PC-3 (cell line): ENCODE measurements at regions of chr7 and their contacts with region 1.

Region 1: DNA sequence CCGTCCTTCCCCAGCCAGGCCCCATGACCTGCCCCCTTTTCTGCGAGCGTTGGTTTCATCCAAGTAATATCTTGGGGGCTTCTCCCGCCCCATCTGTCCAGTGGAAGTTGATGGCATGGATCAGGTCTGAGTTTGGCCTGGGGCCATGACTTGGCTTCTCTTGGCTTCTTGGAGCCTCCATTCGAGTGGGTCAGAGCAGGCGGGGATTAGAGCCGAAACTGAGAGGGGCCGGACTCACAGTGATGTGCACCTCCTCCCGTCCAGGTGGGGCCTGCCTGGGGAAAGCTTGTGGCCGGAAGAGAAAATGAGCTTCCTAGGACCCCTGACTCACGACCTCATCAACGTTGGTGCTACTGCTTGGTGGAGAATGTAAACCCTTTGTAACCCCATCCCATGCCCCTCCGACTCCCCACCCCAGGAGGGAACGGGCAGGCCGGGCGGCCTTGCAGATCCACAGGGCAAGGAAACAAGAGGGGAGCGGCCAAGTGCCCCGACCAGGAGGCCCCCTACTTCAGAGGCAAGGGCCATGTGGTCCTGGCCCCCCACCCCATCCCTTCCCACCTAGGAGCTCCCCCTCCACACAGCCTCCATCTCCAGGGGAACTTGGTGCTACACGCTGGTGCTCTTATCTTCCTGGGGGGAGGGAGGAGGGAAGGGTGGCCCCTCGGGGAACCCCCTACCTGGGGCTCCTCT is 15.1 kb upstream of the LIMK1 start:
- DNase-seq: no peak
- ATAC-seq: no peak
- H3K4me3 ChIP-seq: no peak overlapping the region
- H3K27ac ChIP-seq: no peak overlapping the region
- H3K4me1 ChIP-seq: no peaks in the 10 kb centered on the region
- H3K27me3 ChIP-seq: no peaks in the 10 kb centered on the region
- CTCF ChIP-seq: no peak

Region 2: DNA sequence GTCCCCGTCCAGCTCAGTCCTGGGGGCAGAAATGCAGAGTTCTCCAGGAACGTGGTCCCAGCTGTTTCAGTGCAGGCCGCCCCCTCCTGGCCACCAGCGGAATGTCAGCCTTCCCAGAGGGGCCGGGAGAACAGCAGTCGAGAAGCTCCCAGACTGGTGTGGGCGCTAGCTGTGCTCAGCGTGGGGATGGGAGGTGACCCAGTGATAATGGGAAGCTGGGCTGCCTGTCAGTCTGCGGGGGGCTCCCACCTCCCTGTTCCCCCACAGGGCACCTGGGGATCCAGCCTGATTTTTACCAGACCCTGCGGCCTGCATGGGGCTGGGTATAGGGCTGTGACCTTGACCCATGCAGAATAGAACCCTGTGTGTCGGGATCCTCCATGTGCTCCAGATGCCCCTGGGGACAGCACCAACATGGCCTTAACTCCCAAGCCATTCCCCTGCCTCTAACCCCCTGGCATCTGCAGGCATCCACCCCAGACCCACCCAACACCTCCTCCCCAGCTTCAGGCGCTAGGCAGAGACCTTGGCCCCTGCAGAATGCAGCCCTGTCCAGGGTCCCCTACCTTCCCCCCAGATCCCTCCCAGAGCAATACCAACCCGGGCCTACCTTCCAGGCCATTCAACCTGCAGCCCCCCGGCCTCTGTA is 41.5 kb before region 1 on chr7:
- CTCF ChIA-PET with region 1: no interaction called
- POLR2A ChIA-PET with region 1: no interaction called
- intact Hi-C with region 1: no loop called
- DNase-seq: peak; percentile 63
- ATAC-seq: peak; percentile 68
- H3K4me3 ChIP-seq: no peak overlapping the region
- H3K27ac ChIP-seq: no peak overlapping the region
- H3K4me1 ChIP-seq: peaks cover 12% of the 10 kb centered on the region
- H3K27me3 ChIP-seq: peaks cover 18% of the 10 kb centered on the region
- CTCF ChIP-seq: peak; percentile 92

Region 3: DNA sequence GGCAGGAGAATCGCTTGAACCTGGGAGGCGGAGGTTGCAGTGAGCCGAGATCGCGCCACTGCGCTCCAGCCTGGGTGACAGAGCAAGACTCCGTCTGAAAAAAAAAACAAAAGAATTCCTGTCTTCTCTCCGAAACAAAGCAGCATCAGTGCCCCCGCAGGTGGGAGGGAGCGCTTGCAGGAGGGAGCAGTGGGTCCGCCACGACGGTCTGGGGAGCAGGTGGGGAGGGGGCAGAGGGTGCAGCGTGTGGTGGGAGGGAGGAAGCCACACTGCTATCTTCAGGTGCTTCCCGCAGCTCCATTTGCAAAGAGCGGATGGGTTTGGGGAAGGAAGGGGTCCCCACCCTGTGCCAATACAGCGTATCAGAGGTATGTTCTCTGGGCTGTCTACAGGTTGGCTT is 46.8 kb after region 1 on chr7:
- CTCF ChIA-PET with region 1: no interaction called
- POLR2A ChIA-PET with region 1: no interaction called
- intact Hi-C with region 1: no loop called
- DNase-seq: no peak
- ATAC-seq: no peak
- H3K4me3 ChIP-seq: no peak overlapping the region
- H3K27ac ChIP-seq: no peak overlapping the region
- H3K4me1 ChIP-seq: no peaks in the 10 kb centered on the region
- H3K27me3 ChIP-seq: no peaks in the 10 kb centered on the region
- CTCF ChIP-seq: peak; percentile 35; the same call in 1 of the 2 replicates

Region 4: DNA sequence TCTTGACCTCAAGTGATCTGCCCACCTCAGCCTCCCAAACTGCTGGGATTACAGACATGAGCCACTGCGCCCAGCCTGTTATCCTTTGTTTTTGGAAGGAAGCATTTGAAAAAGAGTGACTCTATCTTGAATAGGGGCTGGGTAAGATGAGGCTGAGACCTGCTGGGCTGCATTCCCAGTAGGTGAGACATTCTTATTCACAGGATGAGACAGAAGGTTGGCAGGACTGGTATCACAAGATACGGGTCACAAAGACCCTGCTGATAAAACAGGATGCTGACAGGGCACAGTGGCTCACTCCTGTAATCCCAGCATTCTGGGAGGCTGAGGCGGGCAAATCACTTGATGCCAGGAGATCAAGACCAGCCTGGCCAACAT is 65.1 kb after region 1 on chr7:
- CTCF ChIA-PET with region 1: interaction called, 14 read pairs
- POLR2A ChIA-PET with region 1: no interaction called
- intact Hi-C with region 1: no loop called
- DNase-seq: peak; percentile 96
- ATAC-seq: peak; percentile 85
- H3K4me3 ChIP-seq: no peak overlapping the region
- H3K27ac ChIP-seq: peak overlapping the region; percentile 57
- H3K4me1 ChIP-seq: peaks cover 6% of the 10 kb centered on the region; the same call in 1 of the 2 replicates
- H3K27me3 ChIP-seq: no peaks in the 10 kb centered on the region
- CTCF ChIP-seq: no peak

Region 5: DNA sequence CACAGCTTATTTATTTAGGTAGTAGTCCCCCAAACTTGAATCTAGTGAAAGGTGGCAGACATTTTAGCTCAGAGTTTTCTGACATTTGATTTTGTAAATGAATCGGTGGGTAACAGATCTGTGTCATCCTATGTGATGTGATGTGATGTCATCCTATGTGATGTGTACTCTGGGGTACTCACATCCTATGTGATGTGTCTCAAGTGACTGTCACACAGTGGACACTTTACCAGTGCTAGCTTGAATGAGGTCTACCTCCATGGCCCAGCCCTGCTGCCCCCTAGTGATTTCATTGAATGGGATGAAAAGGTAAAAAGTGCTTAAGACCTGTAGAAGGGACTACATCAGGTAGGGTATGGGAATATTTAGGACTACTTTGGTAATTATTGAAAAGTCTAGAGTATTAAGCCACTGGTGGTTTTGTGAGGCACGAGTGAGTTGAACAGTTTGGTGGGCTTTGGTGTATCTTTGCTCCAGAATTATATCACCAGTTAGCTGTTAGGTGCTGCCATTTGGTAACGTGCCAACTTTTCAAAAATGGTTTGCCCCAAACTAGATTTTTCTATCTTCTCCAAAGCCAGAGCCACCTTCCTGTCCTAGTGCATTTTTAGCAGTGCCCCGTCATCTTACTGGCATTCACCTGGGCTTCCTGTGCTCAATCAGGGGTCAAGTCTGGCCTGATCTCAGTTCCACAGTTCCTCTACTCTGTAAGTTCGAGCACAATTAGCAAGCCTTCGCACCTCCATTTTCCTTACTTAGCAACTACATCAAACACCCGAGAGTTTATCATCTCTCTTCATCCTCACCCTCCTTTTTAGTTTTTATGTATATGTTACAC is 115.3 kb after region 1 on chr7:
- CTCF ChIA-PET with region 1: no interaction called
- POLR2A ChIA-PET with region 1: no interaction called
- intact Hi-C with region 1: loop called (anchors 5 kb)
- DNase-seq: peak; percentile 62
- ATAC-seq: peak; percentile 45
- H3K4me3 ChIP-seq: no peak overlapping the region
- H3K27ac ChIP-seq: no peak overlapping the region
- H3K4me1 ChIP-seq: peaks cover 21% of the 10 kb centered on the region
- H3K27me3 ChIP-seq: no peaks in the 10 kb centered on the region
- CTCF ChIP-seq: peak; percentile 71

Region 6: DNA sequence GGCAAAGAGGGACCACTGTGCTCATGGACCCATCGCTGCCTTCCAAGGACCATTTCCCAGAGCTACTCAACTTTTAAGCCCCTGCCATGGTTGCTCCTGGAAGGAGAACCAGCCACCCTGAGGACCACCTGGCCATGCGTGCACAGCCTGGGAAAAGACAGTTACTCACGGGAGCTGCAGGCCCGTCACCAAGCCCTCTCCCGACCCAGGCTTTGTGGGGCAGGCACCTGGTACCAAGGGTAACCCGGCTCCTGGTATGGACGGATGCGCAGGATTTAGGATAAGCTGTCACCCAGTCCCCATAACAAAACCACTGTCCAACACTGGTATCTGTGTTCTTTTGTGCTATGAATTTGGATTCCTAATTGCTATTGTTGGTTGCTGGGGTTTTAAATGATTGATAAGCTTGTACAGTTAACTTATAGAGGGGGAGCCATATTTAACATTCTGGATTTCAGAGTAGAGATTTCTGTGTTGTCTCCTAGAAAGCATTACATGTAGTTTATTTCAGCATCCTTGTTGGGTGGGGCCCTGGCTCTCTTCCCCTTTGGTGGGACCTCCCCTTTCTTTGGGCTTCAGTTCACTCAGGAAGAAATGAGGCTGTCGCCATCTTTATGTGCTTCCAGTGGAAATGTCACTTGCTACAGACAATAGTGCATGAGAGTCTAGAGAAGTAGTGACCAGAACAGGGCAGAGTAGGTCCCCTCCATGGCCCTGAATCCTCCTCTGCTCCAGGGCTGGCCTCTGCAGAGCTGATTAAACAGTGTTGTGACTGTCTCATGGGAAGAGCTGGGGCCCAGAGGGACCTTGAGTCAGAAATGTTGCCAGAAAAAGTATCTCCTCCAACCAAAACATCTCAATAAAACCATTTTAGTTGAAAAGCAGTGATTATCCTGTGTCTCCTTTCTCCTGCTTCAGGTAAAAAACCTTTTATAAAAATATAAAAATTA is 160.7 kb after region 1 on chr7:
- CTCF ChIA-PET with region 1: interaction called, 12 read pairs
- POLR2A ChIA-PET with region 1: no interaction called
- intact Hi-C with region 1: no loop called
- DNase-seq: no peak
- ATAC-seq: no peak
- H3K4me3 ChIP-seq: no peak overlapping the region
- H3K27ac ChIP-seq: no peak overlapping the region
- H3K4me1 ChIP-seq: no peaks in the 10 kb centered on the region
- H3K27me3 ChIP-seq: no peaks in the 10 kb centered on the region
- CTCF ChIP-seq: no peak